Testis (tissue), 5 donors: ENCODE measurements at regions of chrX and their contacts with region 1.

Region 1: DNA sequence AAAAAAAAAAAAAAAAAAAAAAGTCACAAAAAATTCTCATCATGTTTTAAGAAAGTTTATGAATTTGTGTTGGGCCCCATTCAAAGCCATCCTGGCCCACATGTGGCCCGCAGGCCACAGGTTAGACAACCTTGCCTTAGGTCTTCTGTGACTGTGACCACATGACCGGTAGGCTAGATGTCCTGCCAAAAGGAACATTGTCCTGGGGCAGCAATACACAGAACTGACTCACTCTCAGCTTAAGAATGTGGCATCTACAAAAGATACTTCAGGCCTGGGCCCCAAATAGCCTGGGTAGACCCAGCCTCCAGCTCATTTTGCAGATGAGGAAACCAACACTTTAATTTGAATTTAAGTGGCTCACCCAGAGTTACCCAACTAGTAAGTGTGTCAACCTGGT is 10.0 kb downstream of the AWAT2 start:
- DNase-seq: no peak
- H3K4me3 ChIP-seq: no peak overlapping the region
- H3K27ac ChIP-seq: no peak overlapping the region
- H3K4me1 ChIP-seq: no peaks in the 10 kb centered on the region
- H3K27me3 ChIP-seq: no peaks in the 10 kb centered on the region
- CTCF ChIP-seq: no peak
- POLR2A ChIP-seq: no peak

Region 2: DNA sequence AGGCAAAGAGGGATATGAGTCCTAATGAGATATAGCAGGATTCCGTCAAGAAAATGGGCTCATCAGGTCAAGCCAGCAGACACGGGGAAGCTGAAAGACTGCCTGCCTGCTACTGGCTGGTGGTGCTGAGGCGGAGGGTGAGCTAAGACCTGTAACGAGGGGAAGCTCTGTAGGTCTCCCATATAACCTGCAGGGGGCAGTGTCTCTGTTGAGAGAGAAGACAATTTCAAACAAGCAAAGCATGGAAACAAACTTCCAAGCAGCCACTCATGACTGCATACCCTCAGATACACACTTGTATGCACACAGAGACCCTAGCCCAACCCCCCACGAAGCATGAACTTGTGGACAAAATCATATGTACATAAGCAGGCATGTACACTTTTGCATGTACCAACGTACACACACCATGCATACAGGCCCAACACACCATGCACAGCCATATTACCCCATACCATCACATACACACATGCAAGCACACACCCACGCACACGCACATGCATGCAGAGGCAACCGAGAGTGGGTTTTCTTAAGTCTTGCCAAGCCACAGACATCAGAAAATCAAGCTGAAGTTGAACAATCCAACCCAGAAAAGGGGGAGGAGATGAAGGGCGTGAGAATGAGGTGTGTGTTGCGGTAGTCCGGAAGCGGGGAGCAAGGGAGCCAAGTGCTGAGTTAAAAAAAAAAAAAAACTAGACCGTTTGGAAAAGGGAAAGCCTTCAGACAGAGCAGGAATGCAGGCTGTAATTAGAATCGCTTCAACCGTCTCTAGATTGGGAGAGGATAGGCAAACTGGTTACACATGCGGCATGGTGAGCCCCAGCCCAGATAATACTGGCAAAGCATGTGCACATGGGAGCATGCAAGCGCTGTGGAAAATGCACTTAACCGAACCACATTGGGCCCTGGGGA is 945.5 kb before region 1 on chrX:
- intact Hi-C with region 1: no loop called
- DNase-seq: peak; percentile 63
- H3K4me3 ChIP-seq: no peak overlapping the region
- H3K27ac ChIP-seq: no peak overlapping the region
- H3K4me1 ChIP-seq: no peaks in the 10 kb centered on the region
- H3K27me3 ChIP-seq: no peaks in the 10 kb centered on the region
- CTCF ChIP-seq: peak in 2 of 3 experiments; percentile 27 to 42
- POLR2A ChIP-seq: no peak

Region 3: GRCh38 chrX:70096052-70096451 is 56.3 kb after region 1 on chrX:
- intact Hi-C with region 1: loop called (anchors 5 kb)
- DNase-seq: peak; percentile 13
- H3K4me3 ChIP-seq: no peak overlapping the region
- H3K27ac ChIP-seq: no peak overlapping the region
- H3K4me1 ChIP-seq: no peaks in the 10 kb centered on the region
- H3K27me3 ChIP-seq: no peaks in the 10 kb centered on the region
- CTCF ChIP-seq: no peak
- POLR2A ChIP-seq: no peak

Region 4: DNA sequence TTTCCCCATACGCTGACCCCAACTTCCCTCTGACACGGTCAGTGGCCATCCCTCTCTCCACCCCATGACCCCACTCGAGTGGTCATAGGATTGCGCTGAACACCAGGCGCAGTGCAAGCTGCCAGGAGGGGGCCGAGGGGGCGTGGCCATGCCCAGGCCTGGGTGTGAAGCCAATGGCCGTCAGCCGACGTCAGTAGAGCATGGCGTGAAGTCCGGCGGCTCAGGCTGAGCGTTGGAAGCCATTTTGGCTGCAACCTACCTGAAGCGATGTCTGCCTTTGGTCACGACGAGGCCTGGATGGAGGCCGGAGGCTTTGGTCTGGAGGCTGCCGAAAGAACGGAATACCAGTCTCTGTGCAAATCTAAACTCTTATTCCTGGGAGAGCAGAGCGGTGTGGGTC is 242.2 kb after region 1 on chrX and contains the start of gene RAB41:
- intact Hi-C with region 1: no loop called
- DNase-seq: peak; percentile 16
- H3K4me3 ChIP-seq: peak within 1 kb of the TSS in 1 of 2 donors; percentile 3
- H3K27ac ChIP-seq: no peak within 1 kb of the TSS
- H3K4me1 ChIP-seq: no peaks in the 10 kb centered on the region
- H3K27me3 ChIP-seq: no peaks in the 10 kb centered on the region
- CTCF ChIP-seq: no peak
- POLR2A ChIP-seq: no peak
- total RNA-seq, gene RAB41: 3.7 to 4.3 TPM